ENCODE measurements at regions of chr15 and their contacts with region 1.

Region 1: GRCh38 chr15:92683232-92683834 is 27.8 kb upstream of the FAM174B start:
- DNase-seq: peak; percentile 75
- H3K4me3 ChIP-seq: no peak overlapping the region
- H3K27ac ChIP-seq: peak overlapping the region in 2 of 4 donors; percentile 14 to 17
- H3K4me1 ChIP-seq: peaks cover 0 to 7% (median 0%) of the 10 kb centered on the region in 4 donors
- H3K27me3 ChIP-seq: no peaks in the 10 kb centered on the region
- CTCF ChIP-seq: peak; percentile 47 to 63 (median 56)
- EP300 ChIP-seq: no peak
- POLR2A ChIP-seq: no peak

Region 2: GRCh38 chr15:92617549-92618520 is 65.5 kb before region 1 on chr15:
- intact Hi-C with region 1: loop called (anchors 5 kb)
- DNase-seq: peak; percentile 94
- H3K4me3 ChIP-seq: no peak overlapping the region
- H3K27ac ChIP-seq: peak overlapping the region; percentile 47 to 77 (median 70)
- H3K4me1 ChIP-seq: peaks cover 0 to 53% (median 41%) of the 10 kb centered on the region in 4 donors
- H3K27me3 ChIP-seq: no peaks in the 10 kb centered on the region
- CTCF ChIP-seq: no peak
- EP300 ChIP-seq: no peak
- POLR2A ChIP-seq: no peak

Region 3: GRCh38 chr15:92655178-92655995 is 27.9 kb before region 1 on chr15 and contains the start of gene FAM174B:
- intact Hi-C with region 1: no loop called
- DNase-seq: peak; percentile 72
- H3K4me3 ChIP-seq: peak within 1 kb of the TSS; percentile 36 to 72 (median 57)
- H3K27ac ChIP-seq: peak within 1 kb of the TSS; percentile 41 to 70 (median 58)
- H3K4me1 ChIP-seq: peaks cover 0 to 32% (median 18%) of the 10 kb centered on the region in 4 donors
- H3K27me3 ChIP-seq: no peaks in the 10 kb centered on the region
- CTCF ChIP-seq: no peak
- EP300 ChIP-seq: no peak
- POLR2A ChIP-seq: no peak
- total RNA-seq, gene FAM174B: 5.3 to 38.9 (median 6.1) TPM